Natural killer cell (primary cell): ENCODE measurements at regions of chr18 and their contacts with region 1.

Region 1: DNA sequence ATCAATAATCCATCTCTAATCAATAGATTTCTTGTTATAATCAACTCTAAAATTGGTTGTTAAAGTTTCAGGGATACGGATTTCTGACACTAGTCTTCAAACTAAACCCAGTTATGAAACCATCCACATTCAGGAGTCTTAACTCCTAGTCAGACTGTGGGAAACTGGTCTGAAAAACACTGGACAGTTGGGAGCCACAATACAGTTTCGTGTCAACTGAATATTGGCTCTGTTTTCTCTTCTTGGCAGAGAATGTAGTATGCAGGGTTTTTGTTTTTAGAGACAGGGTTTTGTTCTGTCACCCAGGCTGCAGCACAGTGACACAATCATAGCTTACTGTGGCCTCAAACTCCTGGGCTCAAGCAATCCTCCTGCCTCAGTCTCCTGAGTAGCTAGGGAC is 123.1 kb downstream of the RTTN start:
- DNase-seq: no peak
- ATAC-seq: no peak
- H3K4me3 ChIP-seq: no peak overlapping the region
- H3K4me3 Mint-ChIP-seq: no peak overlapping the region
- H3K27ac ChIP-seq: no peak overlapping the region
- H3K27ac Mint-ChIP-seq: no peak overlapping the region
- H3K4me1 ChIP-seq: no peaks in the 10 kb centered on the region
- H3K4me1 Mint-ChIP-seq: no peaks in the 10 kb centered on the region
- H3K27me3 ChIP-seq: no peaks in the 10 kb centered on the region
- H3K27me3 Mint-ChIP-seq: no peaks in the 10 kb centered on the region
- CTCF ChIP-seq: no peak

Region 2: GRCh38 chr18:69636529-69637301 is 445.7 kb before region 1 on chr18:
- intact Hi-C with region 1: loop called (anchors 1 kb)
- DNase-seq: peak in 1 of 2 donors; percentile 57
- ATAC-seq: peak in 2 of 3 donors; percentile 66 to 75
- H3K4me3 ChIP-seq: no peak overlapping the region
- H3K4me3 Mint-ChIP-seq: no peak overlapping the region
- H3K27ac ChIP-seq: no peak overlapping the region
- H3K27ac Mint-ChIP-seq: no peak overlapping the region
- H3K4me1 ChIP-seq: no peaks in the 10 kb centered on the region
- H3K4me1 Mint-ChIP-seq: peaks cover 6 to 9% of the 10 kb centered on the region in 2 donors
- H3K27me3 ChIP-seq: peaks cover 6% of the 10 kb centered on the region
- H3K27me3 Mint-ChIP-seq: peaks cover 5 to 37% of the 10 kb centered on the region in 2 donors
- CTCF ChIP-seq: peak; percentile 39

Region 3: GRCh38 chr18:69845593-69846506 is 236.6 kb before region 1 on chr18:
- intact Hi-C with region 1: loop called (anchors 10 kb)
- DNase-seq: peak in 1 of 2 donors; percentile 10
- ATAC-seq: no peak
- H3K4me3 ChIP-seq: no peak overlapping the region
- H3K4me3 Mint-ChIP-seq: no peak overlapping the region
- H3K27ac ChIP-seq: no peak overlapping the region
- H3K27ac Mint-ChIP-seq: no peak overlapping the region
- H3K4me1 ChIP-seq: no peaks in the 10 kb centered on the region
- H3K4me1 Mint-ChIP-seq: no peaks in the 10 kb centered on the region
- H3K27me3 ChIP-seq: no peaks in the 10 kb centered on the region
- H3K27me3 Mint-ChIP-seq: no peaks in the 10 kb centered on the region
- CTCF ChIP-seq: no peak

Region 4: DNA sequence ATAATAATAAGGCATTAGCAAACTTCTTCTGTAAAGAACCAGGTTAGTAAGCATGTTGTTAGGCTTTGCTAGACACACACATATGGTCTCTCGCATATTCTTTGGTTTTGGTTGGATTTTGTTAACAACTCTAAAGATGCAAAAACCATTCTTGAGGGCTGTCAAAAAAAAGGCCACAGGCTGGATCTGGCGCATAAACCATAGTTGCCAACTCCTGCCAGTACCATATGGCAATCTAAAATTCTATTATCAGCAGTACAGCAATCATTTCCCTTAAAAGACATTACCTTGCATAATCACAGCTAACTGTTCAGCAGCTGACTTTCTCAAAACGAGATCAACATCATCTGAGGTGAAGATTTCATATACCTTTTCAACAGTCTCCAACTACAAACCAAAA is 59.6 kb after region 1 on chr18:
- intact Hi-C with region 1: no loop called
- DNase-seq: no peak
- ATAC-seq: no peak
- H3K4me3 ChIP-seq: no peak overlapping the region
- H3K4me3 Mint-ChIP-seq: no peak overlapping the region
- H3K27ac ChIP-seq: no peak overlapping the region
- H3K27ac Mint-ChIP-seq: no peak overlapping the region
- H3K4me1 ChIP-seq: no peaks in the 10 kb centered on the region
- H3K4me1 Mint-ChIP-seq: peaks cover 0 to 6% of the 10 kb centered on the region in 2 donors
- H3K27me3 ChIP-seq: no peaks in the 10 kb centered on the region
- H3K27me3 Mint-ChIP-seq: no peaks in the 10 kb centered on the region
- CTCF ChIP-seq: no peak